CD4-positive, alpha-beta T cell (primary cell): ENCODE measurements at regions of chr3 and their contacts with region 1.

Region 1: DNA sequence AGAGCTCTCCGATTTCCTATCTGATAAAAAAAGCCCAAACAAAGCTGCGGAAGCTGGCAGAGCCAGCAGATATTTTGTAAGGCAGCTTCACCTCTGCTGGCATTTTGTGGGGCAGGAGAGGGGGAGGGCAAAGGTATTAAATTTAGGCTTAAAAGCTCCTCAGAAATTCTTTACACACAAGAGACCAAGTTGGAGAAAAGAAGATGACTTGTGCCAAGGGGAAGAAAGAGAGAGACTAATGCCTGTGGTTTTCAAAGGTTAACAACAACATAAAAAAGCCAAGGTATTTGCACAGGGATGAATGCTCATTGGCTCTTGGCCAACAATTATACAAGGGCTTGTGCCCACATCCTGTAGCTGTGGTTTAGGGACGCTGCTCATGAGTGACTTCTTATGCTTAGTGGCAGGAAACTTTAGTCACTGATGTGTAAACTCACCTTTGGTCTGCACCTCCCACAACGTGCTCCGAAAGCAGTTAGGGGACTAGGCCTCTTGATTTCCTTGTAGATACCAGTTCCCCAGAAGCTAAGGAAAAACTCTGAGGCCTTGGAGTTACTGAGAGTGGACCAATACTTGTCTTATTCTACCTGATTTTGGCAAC is 152.9 kb downstream of the TPRG1 start:
- DNase-seq: peak; percentile 48 to 97 (median 71)
- ATAC-seq: peak; percentile 96
- H3K4me3 ChIP-seq: no peak overlapping the region
- H3K4me3 Mint-ChIP-seq: peak overlapping the region; percentile 86
- H3K27ac ChIP-seq: peak overlapping the region; percentile 26 to 33
- H3K27ac Mint-ChIP-seq: peak overlapping the region; percentile 92
- H3K4me1 ChIP-seq: peaks cover 34% of the 10 kb centered on the region
- H3K4me1 Mint-ChIP-seq: peaks cover 75% of the 10 kb centered on the region
- H3K27me3 ChIP-seq: no peaks in the 10 kb centered on the region
- H3K27me3 Mint-ChIP-seq: no peaks in the 10 kb centered on the region
- CTCF ChIP-seq: no peak

Region 2: DNA sequence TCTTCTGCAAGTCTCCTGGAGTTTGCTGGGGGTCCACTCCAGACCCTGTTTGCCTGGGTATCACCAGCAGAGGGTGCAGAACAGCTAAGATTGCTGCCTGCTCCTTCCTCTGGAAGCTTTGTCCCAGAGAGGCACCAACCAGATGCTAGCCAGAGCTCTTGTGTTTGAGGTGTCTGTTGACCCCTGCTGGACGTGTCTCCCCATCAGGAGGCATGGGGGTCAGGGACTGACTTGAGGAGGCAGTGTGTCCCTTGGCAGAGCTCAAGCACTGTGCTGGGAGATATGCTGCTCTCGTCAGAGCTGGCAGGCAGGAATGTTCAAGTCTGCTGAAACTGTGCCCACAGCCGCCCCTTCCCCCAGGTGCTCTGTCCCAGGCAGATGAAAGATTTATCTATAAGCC is 66.4 kb before region 1 on chr3:
- CTCF ChIA-PET with region 1: no interaction called
- POLR2A ChIA-PET with region 1: no interaction called
- intact Hi-C with region 1: no loop called
- DNase-seq: no peak
- ATAC-seq: no peak
- H3K4me3 ChIP-seq: no peak overlapping the region
- H3K4me3 Mint-ChIP-seq: no peak overlapping the region
- H3K27ac ChIP-seq: no peak overlapping the region
- H3K27ac Mint-ChIP-seq: no peak overlapping the region
- H3K4me1 ChIP-seq: no peaks in the 10 kb centered on the region
- H3K4me1 Mint-ChIP-seq: no peaks in the 10 kb centered on the region
- H3K27me3 ChIP-seq: no peaks in the 10 kb centered on the region
- H3K27me3 Mint-ChIP-seq: no peaks in the 10 kb centered on the region
- CTCF ChIP-seq: no peak

Region 3: DNA sequence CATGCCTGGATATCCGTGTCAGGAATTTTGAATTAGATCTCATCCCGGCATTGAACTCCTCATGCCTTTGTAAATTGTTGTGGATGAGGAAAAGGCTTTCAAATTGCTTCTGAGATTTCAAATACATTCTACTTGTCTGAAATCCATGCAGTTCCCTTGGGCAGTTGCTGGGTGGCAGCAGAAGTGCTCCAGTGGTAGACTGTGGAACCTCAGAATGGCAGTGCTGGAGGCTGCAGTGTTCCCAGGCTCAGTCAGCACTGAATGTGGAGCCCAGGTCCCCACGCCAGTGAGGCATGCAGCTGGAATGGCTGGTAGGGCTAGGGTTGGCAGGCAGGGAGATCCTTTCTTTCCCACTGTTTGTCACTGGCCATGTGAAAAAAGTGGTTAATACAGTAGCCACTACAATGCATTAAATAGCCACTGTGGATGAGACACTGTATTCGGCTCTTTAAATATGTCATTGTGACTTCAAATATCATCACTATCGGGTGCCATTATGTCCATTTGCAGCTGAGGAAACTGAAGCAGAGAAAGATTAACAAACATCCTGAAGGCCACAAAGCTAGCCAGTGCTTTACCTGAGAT is 54.3 kb before region 1 on chr3:
- CTCF ChIA-PET with region 1: interaction called, 6 read pairs
- POLR2A ChIA-PET with region 1: interaction called, 14 read pairs
- intact Hi-C with region 1: loop called in 1 of 2 experiments (anchors 2 kb)
- DNase-seq: peak in 13 of 14 experiments; percentile 4 to 64 (median 17)
- ATAC-seq: peak; percentile 49
- H3K4me3 ChIP-seq: no peak overlapping the region
- H3K4me3 Mint-ChIP-seq: no peak overlapping the region
- H3K27ac ChIP-seq: no peak overlapping the region
- H3K27ac Mint-ChIP-seq: no peak overlapping the region
- H3K4me1 ChIP-seq: peaks cover 6% of the 10 kb centered on the region
- H3K4me1 Mint-ChIP-seq: peaks cover 19% of the 10 kb centered on the region
- H3K27me3 ChIP-seq: no peaks in the 10 kb centered on the region
- H3K27me3 Mint-ChIP-seq: no peaks in the 10 kb centered on the region
- CTCF ChIP-seq: peak; percentile 58

Region 4: DNA sequence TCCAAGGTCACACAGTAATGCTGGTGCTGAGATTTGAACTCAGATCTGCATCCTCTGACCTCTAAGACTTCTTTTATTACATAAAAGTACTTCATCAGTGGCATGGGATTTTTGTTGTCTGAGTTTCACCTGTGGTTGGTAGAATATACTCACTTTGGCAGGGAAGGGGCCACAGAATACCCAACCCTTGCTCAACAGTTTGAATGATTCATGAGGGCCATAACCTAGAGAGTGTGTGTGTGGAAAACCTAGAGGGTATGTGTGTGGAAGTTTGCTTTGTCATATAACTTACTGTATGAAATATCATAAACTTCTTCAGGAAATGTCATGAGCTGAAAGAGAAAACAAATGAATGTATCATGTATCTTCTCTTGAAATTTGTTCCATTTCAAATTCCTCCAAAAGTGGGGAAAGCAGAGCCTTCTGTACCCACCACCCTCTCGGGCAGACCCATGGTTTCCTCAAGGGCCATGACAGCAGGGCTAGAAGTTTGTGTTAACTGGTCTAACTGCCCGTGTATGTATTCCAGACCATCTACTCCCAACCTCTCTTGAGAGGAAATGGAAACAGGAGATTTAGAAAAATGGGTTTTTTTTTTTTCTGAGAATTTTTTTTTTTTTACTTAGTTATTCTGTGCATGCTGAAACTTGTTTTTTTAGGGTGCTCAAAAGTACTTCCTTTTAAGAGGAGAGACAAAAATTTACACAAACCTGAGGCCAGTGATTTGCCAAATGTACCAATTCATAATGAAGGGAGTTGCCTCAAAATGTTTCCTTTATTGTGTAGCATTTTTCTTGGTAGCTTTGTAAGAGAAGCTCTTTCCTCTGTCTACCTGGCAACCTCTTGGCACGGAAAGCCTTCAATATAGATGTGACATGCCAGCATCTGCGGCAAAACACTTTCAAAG is 25.9 kb before region 1 on chr3:
- CTCF ChIA-PET with region 1: interaction called, 3 read pairs
- POLR2A ChIA-PET with region 1: interaction called, 14 read pairs
- intact Hi-C with region 1: loop called in 1 of 2 experiments (anchors 2 kb)
- DNase-seq: peak in 1 of 14 experiments; percentile 16
- ATAC-seq: no peak
- H3K4me3 ChIP-seq: no peak overlapping the region
- H3K4me3 Mint-ChIP-seq: peak overlapping the region; percentile 12
- H3K27ac ChIP-seq: no peak overlapping the region
- H3K27ac Mint-ChIP-seq: peak overlapping the region; percentile 69
- H3K4me1 ChIP-seq: no peaks in the 10 kb centered on the region
- H3K4me1 Mint-ChIP-seq: peaks cover 56% of the 10 kb centered on the region
- H3K27me3 ChIP-seq: no peaks in the 10 kb centered on the region
- H3K27me3 Mint-ChIP-seq: no peaks in the 10 kb centered on the region
- CTCF ChIP-seq: no peak

Region 5: DNA sequence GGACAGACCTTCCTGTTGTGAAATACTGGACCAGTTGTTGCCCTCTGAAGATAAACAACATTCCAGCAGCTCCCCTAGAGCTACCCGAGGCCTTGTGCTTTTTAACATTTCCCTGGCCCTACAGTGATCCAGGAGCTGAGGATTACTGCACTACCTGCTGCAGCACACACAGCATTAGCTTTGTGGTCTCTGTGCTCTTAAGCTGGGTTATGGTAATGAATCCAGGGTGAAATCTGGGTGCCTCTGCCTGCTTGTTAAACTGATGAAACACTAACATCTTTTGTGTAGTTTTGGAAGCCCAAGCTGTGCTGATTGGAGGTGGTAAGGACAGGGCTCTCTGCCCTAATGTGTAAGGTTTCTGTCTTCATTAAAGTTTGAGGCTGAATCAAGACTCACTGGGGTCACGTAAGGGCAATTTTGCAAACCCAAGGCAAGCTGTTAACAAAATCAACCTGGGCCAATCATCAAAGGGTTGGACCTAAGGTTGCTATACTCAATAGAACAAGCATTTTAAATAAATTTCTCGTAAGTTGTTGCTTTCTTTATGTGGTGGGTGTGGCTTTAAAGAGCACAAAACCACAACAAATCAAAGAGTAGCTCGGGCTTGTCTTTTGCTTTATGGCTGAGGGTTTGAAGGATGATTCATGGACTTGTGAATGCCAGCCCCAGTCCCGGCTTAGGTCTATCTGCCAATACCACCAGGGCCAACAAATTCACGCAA is 31.0 kb after region 1 on chr3:
- CTCF ChIA-PET with region 1: interaction called, 5 read pairs
- POLR2A ChIA-PET with region 1: interaction called, 32 read pairs
- intact Hi-C with region 1: loop called (anchors 1 to 5 kb)
- DNase-seq: peak; percentile 14 to 80 (median 38)
- ATAC-seq: peak; percentile 83
- H3K4me3 ChIP-seq: peak overlapping the region; percentile 8
- H3K4me3 Mint-ChIP-seq: peak overlapping the region; percentile 52
- H3K27ac ChIP-seq: peak overlapping the region; percentile 13 to 48
- H3K27ac Mint-ChIP-seq: peak overlapping the region; percentile 90
- H3K4me1 ChIP-seq: peaks cover 19% of the 10 kb centered on the region
- H3K4me1 Mint-ChIP-seq: peaks cover 48% of the 10 kb centered on the region
- H3K27me3 ChIP-seq: no peaks in the 10 kb centered on the region
- H3K27me3 Mint-ChIP-seq: no peaks in the 10 kb centered on the region
- CTCF ChIP-seq: no peak

Region 6: DNA sequence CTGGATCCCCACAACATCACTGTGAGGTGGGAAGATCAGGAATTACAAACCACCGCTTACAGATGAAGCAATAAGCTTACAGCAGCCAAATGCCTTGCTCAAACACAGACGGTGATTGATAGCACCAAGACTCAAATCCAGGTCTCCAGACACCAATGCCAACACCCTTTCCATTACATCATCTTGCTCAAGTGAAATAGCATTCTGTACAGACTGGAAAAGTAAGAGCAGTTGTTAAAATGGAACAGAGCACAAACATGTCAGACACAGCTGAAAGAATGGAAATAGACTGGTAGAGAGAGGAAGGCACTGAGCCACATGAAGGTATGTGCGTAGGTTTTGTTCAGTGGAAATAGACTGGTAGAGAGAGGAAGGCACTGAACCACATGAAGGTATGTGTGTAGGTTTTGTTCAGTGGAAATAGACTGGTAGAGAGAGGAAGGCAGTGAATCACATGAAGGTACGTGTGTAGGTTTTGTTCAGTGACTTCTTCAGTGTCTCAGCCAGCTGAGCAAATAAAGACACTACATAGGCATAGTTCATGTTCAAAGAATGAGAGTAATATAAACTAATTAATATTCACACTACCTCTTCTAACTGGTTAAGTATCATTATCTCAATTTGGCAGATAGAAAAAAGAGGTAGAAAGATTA is 982.0 kb after region 1 on chr3:
- CTCF ChIA-PET with region 1: no interaction called
- POLR2A ChIA-PET with region 1: no interaction called
- intact Hi-C with region 1: loop called in 1 of 2 experiments (anchors 10 kb)
- DNase-seq: peak in 4 of 14 experiments; percentile 25 to 57 (median 47)
- ATAC-seq: peak; percentile 87
- H3K4me3 ChIP-seq: no peak overlapping the region
- H3K4me3 Mint-ChIP-seq: peak overlapping the region; percentile 0
- H3K27ac ChIP-seq: no peak overlapping the region
- H3K27ac Mint-ChIP-seq: peak overlapping the region; percentile 74
- H3K4me1 ChIP-seq: no peaks in the 10 kb centered on the region
- H3K4me1 Mint-ChIP-seq: peaks cover 21% of the 10 kb centered on the region
- H3K27me3 ChIP-seq: no peaks in the 10 kb centered on the region
- H3K27me3 Mint-ChIP-seq: peaks cover 3% of the 10 kb centered on the region
- CTCF ChIP-seq: no peak